Activated naive CD4-positive, alpha-beta T cell treated with anti-CD3 and anti-CD28 coated beads, Interleukin-2, amount 10 ng/mL, durations not matched to agents 7 days and 5 days (primary cell): ENCODE measurements at regions of chr10 and their contacts with region 1.

Region 1: GRCh38 chr10:59865101-59865500 is 41.3 kb downstream of the CCDC6 start:
- DNase-seq: no peak
- H3K4me3 Mint-ChIP-seq: no peak overlapping the region
- H3K27ac Mint-ChIP-seq: no peak overlapping the region
- H3K4me1 Mint-ChIP-seq: peaks cover 18% of the 10 kb centered on the region
- H3K27me3 Mint-ChIP-seq: no peaks in the 10 kb centered on the region

Region 2: GRCh38 chr10:59387951-59388670 is 477.0 kb before region 1 on chr10:
- CTCF ChIA-PET with region 1: no interaction called
- DNase-seq: no peak
- H3K4me3 Mint-ChIP-seq: no peak overlapping the region
- H3K27ac Mint-ChIP-seq: no peak overlapping the region
- H3K4me1 Mint-ChIP-seq: no peaks in the 10 kb centered on the region
- H3K27me3 Mint-ChIP-seq: no peaks in the 10 kb centered on the region

Region 3: GRCh38 chr10:59852670-59853069 is 12.4 kb before region 1 on chr10:
- CTCF ChIA-PET with region 1: interaction called, 15 read pairs
- DNase-seq: no peak
- H3K4me3 Mint-ChIP-seq: no peak overlapping the region
- H3K27ac Mint-ChIP-seq: no peak overlapping the region
- H3K4me1 Mint-ChIP-seq: peaks cover 6% of the 10 kb centered on the region
- H3K27me3 Mint-ChIP-seq: no peaks in the 10 kb centered on the region

Region 4: DNA sequence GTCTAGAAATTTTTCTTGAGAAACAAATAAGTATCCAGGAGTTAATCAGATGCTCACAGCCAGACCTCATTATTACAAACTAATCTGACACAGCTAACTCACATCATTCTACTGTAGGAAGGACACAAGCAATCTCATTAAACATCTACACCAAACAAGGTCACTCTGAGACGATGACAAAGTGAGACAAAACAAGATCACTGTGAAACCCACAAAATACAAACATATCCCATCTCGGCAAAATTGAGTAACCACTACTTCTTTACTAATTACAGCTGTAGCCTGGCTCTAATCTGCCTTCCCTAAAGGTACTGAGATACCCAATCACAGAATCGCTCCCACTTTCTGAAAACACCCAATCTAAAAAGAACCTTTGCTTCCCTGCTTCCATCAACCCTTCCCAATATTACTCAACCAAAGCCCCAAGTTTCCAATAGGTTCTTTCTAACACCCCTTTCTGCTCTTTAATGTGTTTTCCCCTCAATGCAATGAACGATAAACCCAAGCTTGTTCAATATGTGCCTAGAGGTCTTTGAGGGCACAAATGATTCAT is 14.3 kb after region 1 on chr10:
- CTCF ChIA-PET with region 1: interaction called, 14 read pairs
- DNase-seq: no peak
- H3K4me3 Mint-ChIP-seq: no peak overlapping the region
- H3K27ac Mint-ChIP-seq: peak overlapping the region; percentile 21
- H3K4me1 Mint-ChIP-seq: peaks cover 48% of the 10 kb centered on the region
- H3K27me3 Mint-ChIP-seq: no peaks in the 10 kb centered on the region

Region 5: DNA sequence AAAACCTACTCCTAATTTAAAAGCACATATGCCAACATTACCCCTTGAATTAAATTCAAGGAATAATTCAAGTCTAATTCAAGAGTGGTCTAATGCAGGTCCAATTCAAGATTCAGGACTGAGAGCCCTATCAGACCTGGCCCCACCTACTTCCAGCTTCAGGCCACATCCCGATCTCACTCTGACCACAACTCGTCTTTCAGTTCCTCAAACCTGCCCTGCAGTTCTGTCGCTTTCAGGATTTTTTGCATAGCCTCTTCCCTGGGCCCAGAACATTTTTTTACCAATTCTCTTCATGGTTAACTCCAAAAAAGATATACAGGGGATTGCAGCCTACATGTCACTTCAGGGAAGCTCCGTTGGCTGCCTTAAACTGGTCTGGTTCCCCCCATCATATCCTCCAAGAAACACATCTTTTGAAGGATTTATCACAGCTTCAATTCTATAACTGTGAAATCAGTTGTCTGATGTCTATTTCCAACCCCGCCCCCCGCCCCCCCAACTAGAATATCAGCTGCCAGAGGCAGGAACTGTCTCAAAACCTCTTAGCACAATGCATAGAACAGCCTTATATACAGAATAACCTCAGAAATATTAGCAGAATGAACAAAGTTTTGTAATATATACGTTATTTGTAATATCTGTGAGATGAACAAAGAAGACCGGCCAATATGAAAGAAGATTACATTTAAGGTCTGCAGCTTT is 20.5 kb after region 1 on chr10:
- CTCF ChIA-PET with region 1: interaction called, 12 read pairs
- DNase-seq: no peak
- H3K4me3 Mint-ChIP-seq: no peak overlapping the region
- H3K27ac Mint-ChIP-seq: no peak overlapping the region
- H3K4me1 Mint-ChIP-seq: peaks cover 57% of the 10 kb centered on the region
- H3K27me3 Mint-ChIP-seq: no peaks in the 10 kb centered on the region

Region 6: DNA sequence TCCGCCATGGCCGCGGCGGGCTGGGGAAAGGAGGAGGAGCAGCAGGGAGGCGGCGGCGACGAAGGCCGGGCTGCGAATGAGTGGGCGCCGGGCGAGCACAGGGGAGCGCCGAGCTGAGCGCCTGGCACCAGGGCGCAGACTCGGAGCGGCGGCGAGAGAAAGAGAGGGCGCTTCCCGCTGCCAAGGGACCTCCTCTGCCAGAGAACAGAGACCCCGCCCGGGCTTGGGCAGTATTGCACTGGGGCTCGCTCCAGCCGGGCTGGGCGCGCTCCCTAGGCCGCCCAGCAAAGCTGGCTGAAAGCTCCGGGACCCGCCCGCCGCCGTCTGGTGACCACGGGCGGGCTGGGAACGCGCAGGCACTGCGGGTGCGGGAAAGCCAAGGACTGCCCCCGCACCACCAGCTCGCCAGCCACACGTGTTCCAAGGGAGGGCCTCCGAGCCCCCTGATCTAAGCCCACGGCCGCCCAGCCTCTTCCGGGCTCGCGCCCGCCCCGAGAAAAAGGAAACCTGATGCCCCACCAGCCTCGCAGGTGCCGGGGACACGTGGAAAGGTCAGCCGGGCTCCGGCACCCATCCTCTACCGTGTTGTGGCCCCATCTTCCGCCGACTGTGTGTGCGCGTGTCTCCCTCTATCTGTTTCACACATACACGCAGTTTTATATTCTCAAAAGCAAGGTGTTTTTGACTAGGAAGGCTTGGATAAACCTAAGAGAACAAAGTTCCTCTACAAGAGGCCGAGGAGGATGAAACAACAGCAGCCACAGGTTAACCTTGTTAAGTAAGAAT is 41.5 kb after region 1 on chr10 and contains the start of gene CCDC6:
- CTCF ChIA-PET with region 1: interaction called, 94 read pairs
- DNase-seq: peak; percentile 94
- H3K4me3 Mint-ChIP-seq: peak within 1 kb of the TSS; percentile 81
- H3K27ac Mint-ChIP-seq: peak within 1 kb of the TSS; percentile 97
- H3K4me1 Mint-ChIP-seq: peaks cover 51% of the 10 kb centered on the region
- H3K27me3 Mint-ChIP-seq: no peaks in the 10 kb centered on the region